Activated CD4-positive, alpha-beta memory T cell treated with anti-CD3 and anti-CD28 coated beads for 36 hours (primary cell): ENCODE measurements at regions of chr7 and their contacts with region 1.

Region 1: GRCh38 chr7:45863715-45864114 is 9.2 kb downstream of the CCDC201 start:
- DNase-seq: no peak
- H3K4me3 Mint-ChIP-seq: no peak overlapping the region
- H3K27ac Mint-ChIP-seq: no peak overlapping the region
- H3K4me1 Mint-ChIP-seq: no peaks in the 10 kb centered on the region
- H3K27me3 Mint-ChIP-seq: peaks cover 3% of the 10 kb centered on the region

Region 2: GRCh38 chr7:45679516-45679915 is 184.2 kb before region 1 on chr7:
- CTCF ChIA-PET with region 1: no interaction called
- POLR2A ChIA-PET with region 1: no interaction called
- intact Hi-C with region 1: loop called (anchors 10 kb)
- DNase-seq: no peak
- H3K4me3 Mint-ChIP-seq: no peak overlapping the region
- H3K27ac Mint-ChIP-seq: no peak overlapping the region
- H3K4me1 Mint-ChIP-seq: no peaks in the 10 kb centered on the region
- H3K27me3 Mint-ChIP-seq: peaks cover 6% of the 10 kb centered on the region